ENCODE measurements at regions of chr15 and their contacts with region 1.

Region 1: DNA sequence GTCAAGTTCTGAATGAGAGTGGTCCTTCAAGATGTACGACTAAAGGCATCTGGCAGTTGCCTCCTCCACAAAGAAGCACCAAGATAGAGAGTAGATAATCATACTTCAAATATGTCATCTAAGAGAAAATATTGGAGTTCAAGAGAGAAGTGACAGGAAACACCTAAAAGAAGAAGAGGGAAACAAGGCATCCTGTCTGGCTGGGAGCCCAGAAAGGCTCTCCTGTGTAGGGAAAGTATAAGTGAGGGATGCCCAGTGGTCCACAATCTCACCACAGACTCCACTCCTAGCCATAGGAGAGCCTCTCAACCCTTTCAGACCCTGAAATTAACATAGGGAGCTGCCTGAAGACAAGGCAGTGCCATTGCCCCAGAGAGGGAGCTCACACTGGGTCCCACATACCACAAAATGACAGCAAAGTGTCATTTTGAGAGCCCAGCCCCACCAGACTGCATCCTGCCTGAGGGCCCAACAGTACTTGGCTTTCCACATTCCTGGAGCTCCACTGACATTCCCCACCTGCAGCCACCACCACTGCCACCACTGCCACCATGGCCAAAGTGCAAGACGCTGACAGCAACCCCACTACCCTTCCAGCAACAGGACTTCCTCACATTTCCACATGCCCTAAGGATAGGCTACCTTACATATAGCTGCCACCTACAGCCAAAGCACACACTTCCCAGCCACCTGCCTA is 210.6 kb downstream of the ATP8B4 start:
- DNase-seq: no peak
- H3K4me3 ChIP-seq: no peak overlapping the region
- H3K27ac ChIP-seq: no peak overlapping the region
- H3K27me3 ChIP-seq: no peaks in the 10 kb centered on the region
- CTCF ChIP-seq: no peak

Region 2: GRCh38 chr15:49428409-49429095 is 479.8 kb before region 1 on chr15:
- intact Hi-C with region 1: no loop called
- DNase-seq: no peak
- H3K4me3 ChIP-seq: no peak overlapping the region
- H3K27ac ChIP-seq: no peak overlapping the region
- H3K27me3 ChIP-seq: no peaks in the 10 kb centered on the region
- CTCF ChIP-seq: no peak

Region 3: DNA sequence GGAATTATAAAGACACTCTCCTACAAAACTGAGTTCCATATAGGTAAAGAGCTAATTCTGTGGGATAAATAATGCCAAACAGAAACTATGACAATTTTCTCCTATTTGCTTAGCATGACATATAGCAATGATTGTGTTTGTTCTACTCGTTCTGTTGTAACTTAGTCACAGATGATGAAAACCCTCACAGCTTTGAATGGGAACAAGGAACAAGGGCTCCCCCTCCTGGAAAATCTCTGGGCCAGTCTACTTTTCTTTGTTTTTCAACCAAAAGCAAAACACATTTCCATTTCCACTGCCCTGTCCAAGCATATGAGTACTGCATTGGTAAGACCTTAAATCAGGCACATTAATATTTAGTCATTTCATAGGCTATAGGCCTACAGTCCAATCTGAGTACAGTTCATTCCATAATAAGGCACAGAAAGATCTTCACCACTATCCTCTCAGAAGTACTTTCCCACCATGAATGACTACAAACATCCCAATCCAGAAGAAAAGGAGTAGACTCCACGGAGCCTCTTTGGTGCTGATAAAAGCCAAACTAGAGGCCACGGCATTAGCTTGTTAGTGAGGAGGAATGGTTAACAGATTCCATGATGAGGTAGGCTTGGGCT is 143.5 kb after region 1 on chr15:
- intact Hi-C with region 1: loop called in 1 of 2 experiments (anchors 5 kb)
- DNase-seq: peak in 7 of 10 donors; percentile 11 to 77 (median 45)
- H3K4me3 ChIP-seq: peak overlapping the region in 1 of 59 donors; percentile 14
- H3K27ac ChIP-seq: peak overlapping the region in 21 of 59 donors; percentile 0 to 62 (median 37)
- H3K27me3 ChIP-seq: no peaks in the 10 kb centered on the region
- CTCF ChIP-seq: peak; percentile 46 to 89 (median 73)